SK-N-SH (cell line): ENCODE measurements at regions of chr9 and their contacts with region 1.

Region 1: GRCh38 chr9:33623658-33624586 is 99.9 kb downstream of the ANKRD18B start:
- DNase-seq: peak; percentile 83
- H3K4me3 ChIP-seq: no peak overlapping the region
- H3K27ac ChIP-seq: no peak overlapping the region
- H3K4me1 ChIP-seq: peaks cover 5 to 12% of the 10 kb centered on the region in 2 experiments; a peak in 2 of 4 replicates
- H3K27me3 ChIP-seq: no peaks in the 10 kb centered on the region; the same call in 1 of the 2 replicates
- CTCF ChIP-seq: peak; percentile 80
- EP300 ChIP-seq: no peak
- RAD21 ChIP-seq: peak; percentile 94

Region 2: DNA sequence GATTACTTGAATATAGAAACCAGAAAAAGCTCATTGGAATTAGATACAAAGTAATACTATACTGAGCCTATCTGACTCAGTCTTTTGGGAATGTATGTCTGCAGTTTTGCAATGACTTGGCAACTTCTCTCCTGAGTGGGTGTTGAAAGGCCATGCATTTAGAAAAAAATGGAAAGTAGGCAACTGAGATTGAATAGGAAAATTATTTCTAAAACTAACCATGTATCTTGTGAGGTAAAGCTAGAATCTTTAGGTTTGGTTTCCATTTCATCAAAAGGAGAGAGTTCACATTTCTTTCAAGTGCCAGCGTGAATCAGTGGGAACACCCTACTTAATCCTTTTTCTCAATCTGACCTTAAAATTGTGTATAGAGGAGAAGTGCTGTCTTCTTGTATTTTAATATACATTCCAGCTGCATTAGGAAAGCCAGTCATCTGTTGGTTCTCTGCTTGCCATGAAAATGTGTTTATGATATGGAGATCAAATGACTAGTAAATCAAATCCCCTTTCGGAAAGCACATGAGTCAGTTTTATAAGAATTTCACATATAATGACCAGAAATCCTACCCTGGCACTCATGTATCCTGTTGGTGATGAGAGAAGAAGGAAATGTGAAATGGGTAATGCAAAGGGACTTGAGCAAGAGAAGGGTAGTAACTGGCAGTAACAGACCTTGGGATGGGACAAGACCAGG is 303.2 kb before region 1 on chr9:
- CTCF ChIA-PET with region 1: no interaction called
- POLR2A ChIA-PET with region 1: no interaction called
- DNase-seq: no peak
- H3K4me3 ChIP-seq: no peak overlapping the region; a peak in 1 of 4 replicates
- H3K27ac ChIP-seq: peak overlapping the region; percentile 69 to 95
- H3K4me1 ChIP-seq: peaks cover 0 to 27% of the 10 kb centered on the region in 2 experiments; a peak in 2 of 4 replicates
- H3K27me3 ChIP-seq: no peaks in the 10 kb centered on the region
- CTCF ChIP-seq: no peak
- EP300 ChIP-seq: peak; percentile 5 to 85; a peak in 2 of 4 replicates
- RAD21 ChIP-seq: no peak

Region 3: GRCh38 chr9:33340186-33340585 is 283.7 kb before region 1 on chr9:
- CTCF ChIA-PET with region 1: no interaction called
- POLR2A ChIA-PET with region 1: no interaction called
- DNase-seq: no peak
- H3K4me3 ChIP-seq: no peak overlapping the region; a peak in 1 of 4 replicates
- H3K27ac ChIP-seq: no peak overlapping the region
- H3K4me1 ChIP-seq: no peaks in the 10 kb centered on the region
- H3K27me3 ChIP-seq: no peaks in the 10 kb centered on the region
- CTCF ChIP-seq: no peak
- EP300 ChIP-seq: no peak
- RAD21 ChIP-seq: no peak

Region 4: DNA sequence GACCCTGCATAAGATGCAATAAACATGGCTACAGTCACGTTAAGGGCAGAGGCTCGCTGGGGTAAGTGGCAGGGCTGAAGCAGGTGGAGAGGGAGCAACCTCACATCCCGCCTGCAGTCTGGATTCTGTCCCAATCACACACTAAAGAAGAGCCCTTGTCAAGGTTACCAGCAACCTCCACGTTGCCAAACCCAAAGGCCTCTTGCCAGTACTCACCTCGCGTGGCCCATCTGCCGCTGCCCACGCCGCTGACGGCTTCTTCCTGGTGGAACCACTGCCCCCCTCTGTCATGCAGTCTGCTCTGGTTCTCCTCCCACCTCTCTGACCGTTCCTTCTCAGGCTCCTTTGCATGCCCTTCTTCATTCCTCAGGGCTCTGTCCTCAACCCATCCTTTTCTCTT is 230.3 kb before region 1 on chr9:
- CTCF ChIA-PET with region 1: no interaction called
- POLR2A ChIA-PET with region 1: no interaction called
- DNase-seq: no peak
- H3K4me3 ChIP-seq: no peak overlapping the region
- H3K27ac ChIP-seq: no peak overlapping the region
- H3K4me1 ChIP-seq: peaks cover 2 to 6% of the 10 kb centered on the region in 2 experiments; a peak in 2 of 4 replicates
- H3K27me3 ChIP-seq: no peaks in the 10 kb centered on the region
- CTCF ChIP-seq: no peak
- EP300 ChIP-seq: no peak
- RAD21 ChIP-seq: no peak

Region 5: DNA sequence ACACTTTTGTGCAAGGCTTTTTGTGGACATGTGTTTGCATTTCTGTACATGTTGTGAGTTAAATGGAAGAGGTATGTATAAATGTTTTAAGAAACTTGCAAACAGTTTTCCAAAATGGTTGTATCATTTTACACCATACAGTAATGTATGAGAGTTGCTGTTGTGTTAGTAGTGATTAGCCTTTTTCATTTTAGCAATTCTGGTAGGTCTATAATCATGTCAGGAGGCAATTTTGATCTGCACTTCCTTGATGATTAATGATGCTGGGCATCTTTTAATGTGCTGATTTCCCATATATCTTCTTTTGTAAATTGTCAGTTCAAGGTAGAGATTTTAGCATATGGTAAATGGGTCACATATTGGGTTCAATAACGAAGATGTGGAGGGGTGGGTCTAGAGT is 12.6 kb before region 1 on chr9:
- CTCF ChIA-PET with region 1: interaction called, 15 read pairs
- POLR2A ChIA-PET with region 1: no interaction called
- DNase-seq: no peak
- H3K4me3 ChIP-seq: no peak overlapping the region
- H3K27ac ChIP-seq: no peak overlapping the region
- H3K4me1 ChIP-seq: no peaks in the 10 kb centered on the region
- H3K27me3 ChIP-seq: no peaks in the 10 kb centered on the region
- CTCF ChIP-seq: no peak
- EP300 ChIP-seq: no peak
- RAD21 ChIP-seq: no peak

Region 6: DNA sequence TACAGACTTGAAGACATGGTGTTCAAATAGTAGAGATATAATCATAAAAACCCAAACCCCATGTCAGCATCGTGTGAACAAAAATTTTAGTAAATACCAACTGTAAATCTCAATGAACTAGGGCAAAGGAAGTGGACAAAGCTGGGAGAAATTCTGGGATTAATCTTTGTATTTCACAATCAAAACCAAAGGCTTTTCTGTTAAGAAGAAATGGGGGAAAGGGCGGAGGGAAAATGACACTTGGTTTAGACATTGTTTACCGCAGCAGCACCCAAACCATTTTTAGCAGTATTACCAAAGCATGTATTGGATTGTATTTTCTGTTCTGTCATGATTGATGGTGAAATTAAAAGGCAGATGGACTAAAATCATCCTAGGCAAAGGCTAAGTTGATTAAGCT is 37.3 kb after region 1 on chr9:
- CTCF ChIA-PET with region 1: interaction called, 17 read pairs
- POLR2A ChIA-PET with region 1: no interaction called
- DNase-seq: no peak
- H3K4me3 ChIP-seq: no peak overlapping the region
- H3K27ac ChIP-seq: no peak overlapping the region
- H3K4me1 ChIP-seq: no peaks in the 10 kb centered on the region
- H3K27me3 ChIP-seq: no peaks in the 10 kb centered on the region
- CTCF ChIP-seq: no peak
- EP300 ChIP-seq: no peak
- RAD21 ChIP-seq: no peak

Region 7: DNA sequence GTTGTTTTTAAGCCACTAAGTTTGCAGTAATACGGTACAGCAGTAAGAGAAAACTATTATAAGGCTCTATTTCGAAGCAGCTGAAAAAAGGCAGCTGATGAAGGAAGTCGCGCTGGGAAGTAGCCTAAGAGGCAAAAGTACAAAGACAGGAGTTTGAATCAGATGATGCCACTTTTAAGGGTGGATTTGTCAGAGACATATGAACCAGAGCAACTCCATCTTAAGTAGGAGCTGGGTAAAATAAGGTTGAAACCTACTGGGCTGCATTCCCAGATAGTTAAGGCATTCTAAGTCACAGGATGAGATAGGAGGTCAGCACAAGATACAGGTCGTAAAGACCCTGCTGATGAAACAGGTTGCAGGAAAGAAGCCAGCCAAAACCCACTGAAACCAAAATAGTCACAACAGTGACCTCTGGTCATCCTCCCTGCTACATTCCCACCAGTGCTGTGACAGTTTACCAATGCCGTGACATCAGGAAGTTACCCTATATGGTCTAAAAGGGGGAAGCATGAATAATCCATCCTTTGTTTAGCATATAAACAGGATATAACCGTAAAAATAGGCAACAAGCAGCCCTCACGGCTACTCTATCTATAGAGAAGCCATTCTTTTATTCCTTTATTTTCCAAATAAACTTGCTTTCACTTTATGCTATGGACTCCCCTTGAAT is 79.6 kb after region 1 on chr9:
- CTCF ChIA-PET with region 1: interaction called, 11 read pairs
- POLR2A ChIA-PET with region 1: no interaction called
- DNase-seq: no peak
- H3K4me3 ChIP-seq: no peak overlapping the region
- H3K27ac ChIP-seq: no peak overlapping the region
- H3K4me1 ChIP-seq: no peaks in the 10 kb centered on the region
- H3K27me3 ChIP-seq: no peaks in the 10 kb centered on the region
- CTCF ChIP-seq: no peak
- EP300 ChIP-seq: no peak
- RAD21 ChIP-seq: no peak

Region 8: GRCh38 chr9:33737811-33738606 is 114.1 kb after region 1 on chr9:
- CTCF ChIA-PET with region 1: interaction called, 59 read pairs
- POLR2A ChIA-PET with region 1: no interaction called
- DNase-seq: peak; percentile 59
- H3K4me3 ChIP-seq: no peak overlapping the region
- H3K27ac ChIP-seq: no peak overlapping the region
- H3K4me1 ChIP-seq: peaks cover 0 to 7% of the 10 kb centered on the region in 2 experiments; a peak in 1 of 4 replicates
- H3K27me3 ChIP-seq: no peaks in the 10 kb centered on the region
- CTCF ChIP-seq: peak; percentile 63
- EP300 ChIP-seq: no peak
- RAD21 ChIP-seq: peak; percentile 82